Motor neuron (in vitro differentiated cells): ENCODE measurements at regions of chr4 and their contacts with region 1.

Region 1: DNA sequence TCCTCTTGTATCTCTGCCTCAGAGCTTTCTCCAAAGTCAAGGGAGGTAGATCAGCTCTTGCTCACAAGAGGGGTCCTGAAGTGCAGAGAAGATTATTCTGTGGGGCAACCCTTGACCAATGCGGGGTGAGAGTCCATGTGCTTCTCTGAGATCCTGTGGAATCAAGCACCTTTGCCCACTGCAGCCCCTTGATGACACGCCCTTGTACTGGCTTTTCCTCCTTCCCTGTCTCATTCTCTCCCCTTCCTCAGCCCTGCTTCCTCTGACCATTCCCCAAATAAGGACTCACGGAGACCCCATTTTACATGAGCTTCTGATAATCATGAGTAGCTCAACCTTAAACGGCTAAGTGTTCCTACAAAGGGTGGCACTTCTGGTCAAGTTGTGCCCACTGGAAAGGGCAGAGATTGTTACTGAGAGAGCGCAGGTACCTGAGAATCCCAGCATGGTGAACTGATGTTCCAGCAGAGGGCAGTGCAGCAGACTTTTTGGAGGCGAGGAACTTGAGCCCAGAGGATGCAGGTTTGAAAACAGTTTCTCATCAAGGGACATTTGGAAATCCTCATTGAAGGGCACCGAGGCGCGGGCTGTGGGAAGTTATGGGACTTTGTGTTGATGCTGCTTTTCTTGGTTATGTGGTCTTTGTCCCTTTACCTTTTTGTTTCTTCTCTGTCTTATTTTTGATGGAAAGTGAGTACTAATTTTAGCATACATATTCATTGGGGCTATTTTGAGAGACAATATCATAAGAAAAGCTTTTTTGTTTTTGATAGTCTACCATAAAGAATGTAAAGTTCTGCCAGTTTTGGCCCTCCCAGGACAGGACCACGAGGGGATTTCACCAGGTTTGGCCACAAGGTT is 201.3 kb downstream of the RBM46 start:
- ATAC-seq: peak in 6 of 8 experiments; percentile 42 to 95 (median 70)
- H3K4me3 ChIP-seq: no peak overlapping the region
- H3K27ac ChIP-seq: no peak overlapping the region
- H3K4me1 ChIP-seq: no peaks in the 10 kb centered on the region

Region 2: DNA sequence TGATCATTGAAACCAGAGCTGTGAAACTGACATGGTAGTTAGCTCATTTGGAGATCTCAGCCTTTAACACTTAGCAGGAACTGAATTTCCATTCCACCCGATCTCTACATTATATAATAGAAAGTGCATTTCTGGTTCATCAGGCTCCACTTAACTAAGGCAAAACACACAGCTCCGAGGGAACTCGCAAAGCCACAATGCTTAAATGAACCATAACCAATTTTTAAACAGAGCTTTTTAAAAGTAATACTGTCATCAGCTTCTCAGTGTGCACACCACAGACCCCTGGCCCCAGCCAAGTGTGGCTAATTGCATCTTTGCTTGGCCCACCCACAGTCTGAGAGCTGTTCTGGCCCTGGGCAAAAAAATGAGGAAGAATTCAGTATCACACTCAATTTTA is 556.9 kb before region 1 on chr4:
- in situ Hi-C with region 1: no loop called
- ATAC-seq: no peak
- H3K4me3 ChIP-seq: no peak overlapping the region
- H3K27ac ChIP-seq: no peak overlapping the region
- H3K4me1 ChIP-seq: peaks cover 2 to 5% of the 10 kb centered on the region in 2 donors

Region 3: DNA sequence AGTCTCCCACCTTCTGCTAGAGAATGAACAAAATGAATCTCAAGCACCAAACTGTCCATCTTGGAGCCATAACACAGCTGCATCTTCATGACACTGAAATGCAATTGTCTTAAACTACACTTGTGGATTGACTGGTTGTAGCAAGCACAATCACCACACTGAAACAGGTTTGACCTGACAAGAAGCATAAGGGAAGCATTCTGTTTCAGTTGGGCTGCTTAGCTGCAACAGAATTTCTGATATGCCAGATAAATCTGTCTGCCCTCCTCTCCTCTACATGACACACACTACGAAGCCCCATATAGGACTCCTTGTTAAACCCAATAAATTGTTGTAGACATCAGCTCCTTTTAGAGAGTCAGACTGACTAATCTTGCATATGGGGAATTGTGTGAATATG is 124.2 kb after region 1 on chr4:
- in situ Hi-C with region 1: no loop called
- ATAC-seq: no peak
- H3K4me3 ChIP-seq: no peak overlapping the region
- H3K27ac ChIP-seq: no peak overlapping the region
- H3K4me1 ChIP-seq: no peaks in the 10 kb centered on the region

Region 4: GRCh38 chr4:155353923-155354540 is 371.6 kb after region 1 on chr4:
- in situ Hi-C with region 1: loop called in 4 of 9 experiments (anchors 25 kb)
- ATAC-seq: peak; percentile 56 to 95 (median 81)
- H3K4me3 ChIP-seq: no peak overlapping the region
- H3K27ac ChIP-seq: no peak overlapping the region
- H3K4me1 ChIP-seq: no peaks in the 10 kb centered on the region

Region 5: DNA sequence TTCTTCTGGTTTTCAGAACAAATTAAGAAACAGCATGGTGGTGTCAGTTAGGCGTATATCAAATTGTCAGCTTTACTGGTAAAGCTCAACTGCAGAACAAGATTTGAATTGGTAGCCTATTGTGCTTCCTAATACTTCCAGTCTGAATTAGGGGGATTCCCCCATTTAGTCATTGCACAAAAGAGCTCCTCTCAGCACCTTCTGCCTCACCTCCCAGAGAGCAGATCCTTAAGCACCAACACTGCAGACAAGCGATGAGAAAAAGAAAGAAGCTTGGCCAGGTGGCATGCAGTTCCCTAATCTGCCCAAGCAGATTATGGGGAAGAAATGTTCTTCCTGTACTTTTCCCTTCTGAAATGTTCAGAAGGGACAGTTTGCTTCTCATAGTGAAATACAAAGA is 385.2 kb after region 1 on chr4:
- in situ Hi-C with region 1: loop called in 5 of 9 experiments (anchors 10 to 25 kb)
- ATAC-seq: no peak
- H3K4me3 ChIP-seq: no peak overlapping the region
- H3K27ac ChIP-seq: no peak overlapping the region
- H3K4me1 ChIP-seq: no peaks in the 10 kb centered on the region